Breast epithelium (tissue), 4 donors: ENCODE measurements at regions of chr12 and their contacts with region 1.

Region 1: GRCh38 chr12:124026755-124027745 is 54.0 kb downstream of the ZNF664 start:
- DNase-seq: no peak
- H3K4me3 ChIP-seq: no peak overlapping the region
- H3K27ac ChIP-seq: no peak overlapping the region
- H3K4me1 ChIP-seq: peaks cover 0 to 4% of the 10 kb centered on the region in 2 donors
- H3K27me3 ChIP-seq: no peaks in the 10 kb centered on the region
- CTCF ChIP-seq: no peak
- POLR2A ChIP-seq: no peak

Region 2: DNA sequence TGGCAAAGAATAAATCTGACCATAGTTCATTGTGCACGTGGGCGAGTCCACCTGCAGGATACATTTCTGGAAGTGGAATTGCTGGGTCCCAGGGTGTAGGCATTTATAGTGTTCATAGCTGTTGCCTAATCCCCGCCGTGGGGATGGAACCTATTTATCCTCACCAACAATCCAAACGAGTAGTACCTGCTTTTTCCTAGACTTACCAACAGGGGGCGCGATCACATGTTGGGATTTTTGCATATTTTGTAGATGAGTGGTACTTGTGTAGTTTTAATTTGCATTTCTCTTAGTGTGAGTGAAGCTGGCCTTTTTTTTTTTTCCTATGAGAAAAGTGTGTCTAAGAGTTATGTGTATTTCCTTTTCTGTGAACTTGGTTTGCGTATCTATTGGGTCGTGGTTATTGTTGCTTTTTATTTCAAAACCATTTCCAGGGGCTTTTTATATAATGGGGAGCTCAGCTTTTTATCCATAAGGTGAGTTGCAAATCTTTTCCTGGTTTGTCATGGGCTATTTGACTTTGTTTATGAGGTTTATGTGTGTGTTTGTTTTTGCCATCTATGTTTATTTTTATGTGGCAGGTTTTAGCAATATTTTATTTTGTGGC is 121.6 kb before region 1 on chr12:
- intact Hi-C with region 1: loop called (anchors 10 kb)
- DNase-seq: peak in 1 of 2 donors; percentile 38
- H3K4me3 ChIP-seq: no peak overlapping the region
- H3K27ac ChIP-seq: no peak overlapping the region
- H3K4me1 ChIP-seq: no peaks in the 10 kb centered on the region
- H3K27me3 ChIP-seq: no peaks in the 10 kb centered on the region
- CTCF ChIP-seq: peak; percentile 61 to 76 (median 73)
- POLR2A ChIP-seq: no peak

Region 3: GRCh38 chr12:124111006-124111405 is 84.0 kb after region 1 on chr12:
- intact Hi-C with region 1: no loop called
- DNase-seq: no peak
- H3K4me3 ChIP-seq: no peak overlapping the region
- H3K27ac ChIP-seq: no peak overlapping the region
- H3K4me1 ChIP-seq: no peaks in the 10 kb centered on the region
- H3K27me3 ChIP-seq: no peaks in the 10 kb centered on the region
- CTCF ChIP-seq: no peak
- POLR2A ChIP-seq: no peak